ENCODE measurements at regions of chr13 and their contacts with region 1.

Region 1: GRCh38 chr13:41193919-41194824 is at the start of gene KBTBD7:
- DNase-seq: peak; percentile 91 to 95 (median 94)
- ATAC-seq: peak; percentile 99
- H3K4me3 ChIP-seq: peak within 1 kb of the TSS; percentile 46
- H3K4me1 ChIP-seq: peaks cover 5% of the 10 kb centered on the region
- CTCF ChIP-seq: no peak
- total RNA-seq, gene KBTBD7: 5.3 to 8.6 (median 5.8) TPM

Region 2: DNA sequence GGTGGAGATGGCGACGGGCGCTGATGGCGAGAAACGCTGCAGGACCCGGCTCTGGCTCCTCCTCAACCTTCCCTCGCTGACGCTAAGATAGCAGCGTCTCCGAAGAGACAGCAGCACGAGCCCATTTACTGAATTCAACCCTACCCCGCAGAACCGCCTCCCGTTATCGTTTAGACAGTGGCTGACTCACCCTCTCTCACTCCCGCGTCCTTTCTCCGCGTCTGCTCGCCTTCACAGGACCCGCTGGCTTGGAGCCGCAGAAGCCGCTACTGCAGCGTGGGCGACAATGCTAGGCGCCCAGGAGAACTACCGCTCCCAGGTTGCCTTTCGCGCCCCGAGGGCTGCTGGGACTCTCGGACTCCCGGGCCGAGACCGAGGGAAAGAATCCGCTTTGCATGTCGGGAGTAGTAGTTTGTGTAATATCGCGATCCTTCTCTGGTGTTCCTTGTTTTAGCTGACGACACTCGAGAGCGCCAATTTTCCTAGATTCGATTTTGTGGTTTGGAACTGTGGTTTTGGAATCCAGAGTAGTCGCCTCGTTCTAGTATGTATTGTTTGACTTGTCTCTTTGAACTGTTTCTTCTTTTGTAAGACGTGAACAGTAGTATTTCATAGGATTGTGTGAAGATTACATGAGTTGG is 61.5 kb before region 1 on chr13 and contains the start of gene KBTBD6:
- intact Hi-C with region 1: loop called in 1 of 2 experiments (anchors 10 kb)
- DNase-seq: peak; percentile 95 to 96 (median 96)
- ATAC-seq: peak; percentile 100
- H3K4me3 ChIP-seq: peak within 1 kb of the TSS; percentile 35
- H3K4me1 ChIP-seq: peaks cover 22% of the 10 kb centered on the region
- CTCF ChIP-seq: no peak
- total RNA-seq, gene KBTBD6: 2.6 to 7.6 (median 3.5) TPM

Measured in mucosa of descending colon (tissue), 3 donors.